K562 (cell line): ENCODE measurements at regions of chr22 and their contacts with region 1.

Region 1: GRCh38 chr22:28442264-28442710 is 237.4 kb downstream of the TTC28 start:
- DNase-seq: peak; percentile 69 to 87 (median 77)
- ATAC-seq: peak; percentile 99
- H3K4me3 ChIP-seq: peak overlapping the region; percentile 30
- H3K27ac ChIP-seq: peak overlapping the region; percentile 48; the same call in 2 of the 3 replicates
- H3K4me1 ChIP-seq: peaks cover 0 to 12% of the 10 kb centered on the region in 2 experiments; a peak in 3 of 5 replicates
- H3K27me3 ChIP-seq: no peaks in the 10 kb centered on the region
- CTCF ChIP-seq: peak; percentile 81 to 95 (median 87)
- EP300 ChIP-seq: no peak
- POLR2A ChIP-seq: no peak
- RAD21 ChIP-seq: peak; percentile 87 to 90

Region 2: GRCh38 chr22:28019881-28020871 is 422.1 kb before region 1 on chr22:
- CTCF ChIA-PET with region 1: interaction called, 4 read pairs
- POLR2A ChIA-PET with region 1: no interaction called
- in situ Hi-C with region 1: loop called (anchors 10 kb)
- intact Hi-C with region 1: loop called (anchors 10 kb)
- DNase-seq: peak; percentile 67 to 78 (median 75)
- ATAC-seq: peak; percentile 97
- H3K4me3 ChIP-seq: no peak overlapping the region
- H3K27ac ChIP-seq: no peak overlapping the region
- H3K4me1 ChIP-seq: peaks cover 0 to 6% of the 10 kb centered on the region in 2 experiments; a peak in 2 of 5 replicates
- H3K27me3 ChIP-seq: no peaks in the 10 kb centered on the region
- CTCF ChIP-seq: peak; percentile 82 to 85 (median 83)
- EP300 ChIP-seq: no peak
- POLR2A ChIP-seq: no peak
- RAD21 ChIP-seq: peak; percentile 69 to 80

Region 3: DNA sequence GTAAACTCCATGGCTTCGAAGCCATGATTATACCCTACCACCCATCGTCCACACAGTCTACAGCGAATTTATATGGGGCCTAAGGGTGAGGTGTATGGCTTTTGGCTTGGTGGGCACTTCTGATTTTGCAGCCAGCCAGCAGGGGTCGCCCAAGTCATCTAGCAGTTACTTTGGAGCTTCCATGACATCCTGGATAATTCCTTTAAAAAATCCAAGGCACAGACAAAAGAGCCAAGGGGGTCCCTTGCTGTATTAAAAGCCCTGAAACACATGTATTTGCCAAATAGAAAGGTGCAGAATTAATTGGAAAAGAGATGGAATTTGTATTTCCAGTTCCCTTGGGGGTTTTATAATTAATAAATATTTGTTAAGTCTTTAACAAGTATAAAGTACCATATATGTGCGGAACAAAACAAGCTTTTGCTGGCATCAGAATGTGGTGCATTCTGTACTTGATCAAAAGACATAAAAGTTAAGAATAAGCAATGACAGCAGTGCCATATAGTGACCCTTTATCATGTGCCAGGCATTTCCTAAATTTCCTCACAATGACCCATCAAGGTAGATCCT is 390.4 kb before region 1 on chr22:
- CTCF ChIA-PET with region 1: interaction called, 4 read pairs
- POLR2A ChIA-PET with region 1: no interaction called
- in situ Hi-C with region 1: no loop called
- intact Hi-C with region 1: loop called (anchors 2 kb)
- DNase-seq: peak; percentile 29 to 63 (median 42)
- ATAC-seq: peak; percentile 61; the same call in 2 of the 3 replicates
- H3K4me3 ChIP-seq: no peak overlapping the region
- H3K27ac ChIP-seq: no peak overlapping the region
- H3K4me1 ChIP-seq: no peaks in the 10 kb centered on the region; a peak in 2 of 5 replicates
- H3K27me3 ChIP-seq: no peaks in the 10 kb centered on the region
- CTCF ChIP-seq: peak; percentile 64 to 79 (median 75)
- EP300 ChIP-seq: no peak
- POLR2A ChIP-seq: no peak
- RAD21 ChIP-seq: peak; percentile 68 to 77

Region 4: DNA sequence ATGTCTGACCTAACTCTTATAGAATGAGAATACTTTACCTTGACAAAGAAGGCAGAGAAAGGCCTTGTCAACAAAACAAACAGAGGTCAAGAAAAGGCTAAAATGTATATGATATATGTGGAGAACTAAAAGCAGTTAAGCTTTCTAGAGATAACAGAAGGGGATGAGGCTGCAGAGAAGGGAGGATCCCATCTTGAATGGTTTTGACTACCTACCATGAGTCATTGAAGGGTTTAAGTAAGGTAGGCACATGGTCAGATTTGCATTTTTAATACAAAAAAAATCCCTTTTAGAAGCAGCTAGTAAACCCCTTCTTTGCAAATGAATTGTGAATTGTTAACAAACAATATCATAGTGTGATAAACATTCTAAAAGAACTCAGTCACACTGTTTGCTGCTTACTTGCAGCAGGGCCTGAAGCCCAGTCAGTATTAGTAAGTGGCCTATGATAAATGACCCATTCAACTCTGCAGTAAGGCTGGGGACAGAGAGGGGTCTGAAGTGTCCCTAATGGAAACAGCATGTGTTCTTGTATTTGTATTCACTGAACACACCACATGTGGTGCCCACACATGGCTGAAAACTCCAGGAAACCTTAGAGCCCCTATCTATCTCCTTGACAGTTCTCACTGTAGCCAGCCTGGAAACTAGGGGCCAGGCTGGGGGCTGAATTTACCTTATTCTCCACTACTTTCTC is 194.5 kb before region 1 on chr22:
- CTCF ChIA-PET with region 1: interaction called, 3 read pairs
- POLR2A ChIA-PET with region 1: no interaction called
- in situ Hi-C with region 1: no loop called
- intact Hi-C with region 1: loop called (anchors 5 kb)
- DNase-seq: peak; percentile 16 to 52 (median 30)
- ATAC-seq: peak; percentile 68
- H3K4me3 ChIP-seq: no peak overlapping the region
- H3K27ac ChIP-seq: peak overlapping the region; percentile 73
- H3K4me1 ChIP-seq: peaks cover 15 to 50% of the 10 kb centered on the region in 2 experiments
- H3K27me3 ChIP-seq: no peaks in the 10 kb centered on the region
- CTCF ChIP-seq: no peak
- EP300 ChIP-seq: peak; percentile 44; the same call in 1 of the 2 replicates
- POLR2A ChIP-seq: no peak
- RAD21 ChIP-seq: no peak